ENCODE measurements at regions of chr3 and their contacts with region 1.

Region 1: GRCh38 chr3:66822186-66823008 is 175.7 kb upstream of the KBTBD8 start:
- DNase-seq: peak; percentile 72
- ATAC-seq: peak; percentile 67
- H3K4me3 ChIP-seq: no peak overlapping the region
- H3K4me3 Mint-ChIP-seq: no peak overlapping the region
- H3K27ac ChIP-seq: no peak overlapping the region
- H3K27ac Mint-ChIP-seq: no peak overlapping the region
- H3K4me1 ChIP-seq: no peaks in the 10 kb centered on the region
- H3K4me1 Mint-ChIP-seq: no peaks in the 10 kb centered on the region
- H3K27me3 ChIP-seq: no peaks in the 10 kb centered on the region
- H3K27me3 Mint-ChIP-seq: peaks cover 10% of the 10 kb centered on the region
- CTCF ChIP-seq: peak; percentile 85

Region 2: GRCh38 chr3:65483480-65483879 is 1338.9 kb before region 1 on chr3:
- CTCF ChIA-PET with region 1: no interaction called
- POLR2A ChIA-PET with region 1: no interaction called
- intact Hi-C with region 1: no loop called
- DNase-seq: no peak
- ATAC-seq: no peak
- H3K4me3 ChIP-seq: no peak overlapping the region
- H3K4me3 Mint-ChIP-seq: no peak overlapping the region
- H3K27ac ChIP-seq: no peak overlapping the region
- H3K27ac Mint-ChIP-seq: no peak overlapping the region
- H3K4me1 ChIP-seq: no peaks in the 10 kb centered on the region
- H3K4me1 Mint-ChIP-seq: no peaks in the 10 kb centered on the region
- H3K27me3 ChIP-seq: no peaks in the 10 kb centered on the region
- H3K27me3 Mint-ChIP-seq: no peaks in the 10 kb centered on the region
- CTCF ChIP-seq: no peak

Region 3: DNA sequence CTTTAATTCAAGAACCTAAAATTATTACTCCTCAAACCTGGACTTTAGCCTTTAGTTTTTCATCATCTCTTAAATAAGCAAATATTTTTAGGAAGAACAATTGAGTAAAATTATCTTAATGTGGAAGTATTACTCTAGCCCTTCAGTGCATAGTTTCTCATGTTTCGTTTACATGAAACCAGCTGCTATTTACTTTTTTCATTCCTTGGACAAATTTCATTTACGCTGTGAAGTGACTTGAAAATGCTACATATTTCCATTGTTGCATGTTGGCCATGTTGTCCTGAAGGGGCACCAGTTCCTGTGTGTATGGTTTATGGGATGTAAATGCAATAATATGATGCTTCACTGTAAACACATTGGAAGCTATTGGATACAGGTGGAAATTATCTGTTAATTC is 551.7 kb before region 1 on chr3:
- CTCF ChIA-PET with region 1: interaction called, 17 read pairs
- POLR2A ChIA-PET with region 1: interaction called, 3 read pairs
- intact Hi-C with region 1: no loop called
- DNase-seq: no peak
- ATAC-seq: no peak
- H3K4me3 ChIP-seq: no peak overlapping the region
- H3K4me3 Mint-ChIP-seq: no peak overlapping the region
- H3K27ac ChIP-seq: no peak overlapping the region
- H3K27ac Mint-ChIP-seq: no peak overlapping the region
- H3K4me1 ChIP-seq: peaks cover 17 to 18% of the 10 kb centered on the region in 2 donors
- H3K4me1 Mint-ChIP-seq: peaks cover 25% of the 10 kb centered on the region
- H3K27me3 ChIP-seq: no peaks in the 10 kb centered on the region
- H3K27me3 Mint-ChIP-seq: no peaks in the 10 kb centered on the region
- CTCF ChIP-seq: no peak

Region 4: GRCh38 chr3:66276705-66277274 is 545.6 kb before region 1 on chr3:
- CTCF ChIA-PET with region 1: interaction called, 80 read pairs
- POLR2A ChIA-PET with region 1: interaction called, 3 read pairs
- intact Hi-C with region 1: loop called (anchors 1 kb)
- DNase-seq: peak; percentile 71
- ATAC-seq: peak; percentile 45
- H3K4me3 ChIP-seq: no peak overlapping the region
- H3K4me3 Mint-ChIP-seq: no peak overlapping the region
- H3K27ac ChIP-seq: no peak overlapping the region
- H3K27ac Mint-ChIP-seq: no peak overlapping the region
- H3K4me1 ChIP-seq: no peaks in the 10 kb centered on the region
- H3K4me1 Mint-ChIP-seq: no peaks in the 10 kb centered on the region
- H3K27me3 ChIP-seq: no peaks in the 10 kb centered on the region
- H3K27me3 Mint-ChIP-seq: no peaks in the 10 kb centered on the region
- CTCF ChIP-seq: peak; percentile 87

Region 5: DNA sequence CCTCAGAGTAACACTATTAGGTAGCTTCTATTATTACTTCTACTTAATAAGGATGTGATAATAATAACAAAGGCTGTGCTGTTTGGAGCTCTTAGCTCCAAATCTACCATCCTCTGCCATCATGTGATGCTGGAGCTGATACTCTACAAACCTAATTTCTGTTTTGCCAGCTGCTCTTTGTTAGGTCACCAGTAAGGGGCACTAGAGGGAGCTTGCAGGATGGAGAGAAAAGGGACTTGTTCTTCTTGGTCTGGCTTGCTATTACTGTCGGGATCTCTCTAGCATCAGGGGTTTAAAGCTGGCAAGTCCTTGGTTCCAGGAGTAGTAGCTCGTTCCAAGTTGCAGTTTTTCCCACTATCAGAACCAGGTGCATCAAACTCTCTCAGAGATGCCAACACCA is 19.2 kb before region 1 on chr3:
- CTCF ChIA-PET with region 1: interaction called, 21 read pairs
- POLR2A ChIA-PET with region 1: no interaction called
- intact Hi-C with region 1: no loop called
- DNase-seq: no peak
- ATAC-seq: no peak
- H3K4me3 ChIP-seq: no peak overlapping the region
- H3K4me3 Mint-ChIP-seq: no peak overlapping the region
- H3K27ac ChIP-seq: no peak overlapping the region
- H3K27ac Mint-ChIP-seq: no peak overlapping the region
- H3K4me1 ChIP-seq: no peaks in the 10 kb centered on the region
- H3K4me1 Mint-ChIP-seq: no peaks in the 10 kb centered on the region
- H3K27me3 ChIP-seq: peaks cover 0 to 6% (median 3%) of the 10 kb centered on the region in 4 experiments
- H3K27me3 Mint-ChIP-seq: peaks cover 28% of the 10 kb centered on the region
- CTCF ChIP-seq: no peak

Region 6: GRCh38 chr3:66809595-66809958 is 12.8 kb before region 1 on chr3:
- CTCF ChIA-PET with region 1: interaction called, 21 read pairs
- POLR2A ChIA-PET with region 1: no interaction called
- intact Hi-C with region 1: no loop called
- DNase-seq: no peak
- ATAC-seq: no peak
- H3K4me3 ChIP-seq: no peak overlapping the region
- H3K4me3 Mint-ChIP-seq: no peak overlapping the region
- H3K27ac ChIP-seq: no peak overlapping the region
- H3K27ac Mint-ChIP-seq: no peak overlapping the region
- H3K4me1 ChIP-seq: no peaks in the 10 kb centered on the region
- H3K4me1 Mint-ChIP-seq: no peaks in the 10 kb centered on the region
- H3K27me3 ChIP-seq: no peaks in the 10 kb centered on the region
- H3K27me3 Mint-ChIP-seq: peaks cover 3% of the 10 kb centered on the region
- CTCF ChIP-seq: no peak